MCF 10A (cell line): ENCODE measurements at regions of chr7 and their contacts with region 1.

Region 1: GRCh38 chr7:73718905-73719805 is at the start of gene STX1A:
- DNase-seq: peak; percentile 73
- H3K4me3 Mint-ChIP-seq: peak within 1 kb of the TSS; percentile 71
- H3K27ac Mint-ChIP-seq: no peak within 1 kb of the TSS
- H3K4me1 Mint-ChIP-seq: peaks cover 34% of the 10 kb centered on the region
- H3K27me3 Mint-ChIP-seq: no peaks in the 10 kb centered on the region
- CTCF ChIP-seq: no peak
- total RNA-seq, gene STX1A: 21.9 and 24.2 TPM in 2 replicates

Region 2: GRCh38 chr7:73351447-73352167 is 367.5 kb before region 1 on chr7:
- CTCF ChIA-PET with region 1: no interaction called
- POLR2A ChIA-PET with region 1: no interaction called
- intact Hi-C with region 1: no loop called
- DNase-seq: no peak
- H3K4me3 Mint-ChIP-seq: no peak overlapping the region
- H3K27ac Mint-ChIP-seq: no peak overlapping the region
- H3K4me1 Mint-ChIP-seq: no peaks in the 10 kb centered on the region
- H3K27me3 Mint-ChIP-seq: peaks cover 12% of the 10 kb centered on the region
- CTCF ChIP-seq: no peak

Region 3: DNA sequence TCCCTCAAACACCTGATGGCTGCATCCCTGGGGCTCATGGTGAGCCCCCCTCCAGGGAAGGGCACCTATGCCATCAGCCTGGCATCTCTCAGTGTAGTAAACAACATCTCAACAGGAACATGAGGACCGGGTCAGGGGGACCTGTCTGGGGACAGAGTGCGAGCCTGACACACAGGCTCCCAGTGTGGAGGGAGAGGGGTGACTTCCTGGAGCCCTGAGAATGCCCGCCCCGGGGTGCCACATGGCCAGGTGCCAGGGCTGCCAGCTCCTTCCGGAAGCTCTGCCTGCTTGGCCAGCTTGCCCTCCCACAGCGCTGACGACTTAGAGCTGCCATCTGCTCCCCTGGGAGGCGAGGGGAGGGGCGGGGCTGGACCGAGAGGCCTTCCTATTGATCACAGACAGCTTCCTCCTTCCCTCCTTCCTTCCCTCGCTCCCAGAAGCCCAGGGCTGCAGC is 12.0 kb before region 1 on chr7:
- CTCF ChIA-PET with region 1: interaction called, 4 read pairs
- POLR2A ChIA-PET with region 1: interaction called, 18 read pairs
- intact Hi-C with region 1: no loop called
- DNase-seq: peak; percentile 84
- H3K4me3 Mint-ChIP-seq: peak overlapping the region; percentile 33
- H3K27ac Mint-ChIP-seq: no peak overlapping the region
- H3K4me1 Mint-ChIP-seq: peaks cover 20% of the 10 kb centered on the region
- H3K27me3 Mint-ChIP-seq: no peaks in the 10 kb centered on the region
- CTCF ChIP-seq: no peak

Region 4: GRCh38 chr7:73758581-73759138 is 39.5 kb after region 1 on chr7:
- CTCF ChIA-PET with region 1: no interaction called
- POLR2A ChIA-PET with region 1: no interaction called
- intact Hi-C with region 1: no loop called
- DNase-seq: no peak
- H3K4me3 Mint-ChIP-seq: no peak overlapping the region
- H3K27ac Mint-ChIP-seq: no peak overlapping the region
- H3K4me1 Mint-ChIP-seq: peaks cover 6% of the 10 kb centered on the region
- H3K27me3 Mint-ChIP-seq: no peaks in the 10 kb centered on the region
- CTCF ChIP-seq: no peak